Endothelial cell of umbilical vein (primary cell): ENCODE measurements at regions of chr1 and their contacts with region 1.

Region 1: DNA sequence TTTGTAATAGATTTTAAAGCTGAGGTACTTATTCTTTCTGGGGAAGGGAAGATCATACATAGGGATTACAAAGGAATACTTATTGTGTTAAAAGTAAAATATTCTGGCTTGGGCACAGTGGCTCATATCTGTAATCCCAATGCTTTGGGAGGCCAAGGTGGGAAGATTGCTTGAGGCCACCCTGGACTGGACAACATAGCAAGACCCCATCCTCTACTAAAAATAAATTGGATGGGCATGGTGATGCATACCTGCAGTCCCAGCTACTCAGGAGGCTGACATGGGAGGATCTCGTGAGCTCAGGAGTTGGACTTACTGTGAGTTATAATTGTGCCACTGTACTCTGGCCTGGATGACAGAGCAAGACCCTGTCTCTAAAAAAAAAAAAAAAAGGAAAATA is 27.6 kb downstream of the GABPB2 start:
- DNase-seq: no peak
- H3K4me3 ChIP-seq: no peak overlapping the region
- H3K27ac ChIP-seq: no peak overlapping the region
- H3K4me1 ChIP-seq: no peaks in the 10 kb centered on the region
- H3K27me3 ChIP-seq: no peaks in the 10 kb centered on the region
- CTCF ChIP-seq: no peak
- POLR2A ChIP-seq: no peak

Region 2: GRCh38 chr1:150955280-150955679 is 142.8 kb before region 1 on chr1:
- CTCF ChIA-PET with region 1: no interaction called
- POLR2A ChIA-PET with region 1: no interaction called
- dilution Hi-C with region 1: no loop called
- intact Hi-C with region 1: no loop called
- DNase-seq: no peak
- H3K4me3 ChIP-seq: no peak overlapping the region
- H3K27ac ChIP-seq: no peak overlapping the region
- H3K4me1 ChIP-seq: no peaks in the 10 kb centered on the region
- H3K27me3 ChIP-seq: no peaks in the 10 kb centered on the region
- CTCF ChIP-seq: no peak
- POLR2A ChIP-seq: no peak

Region 3: DNA sequence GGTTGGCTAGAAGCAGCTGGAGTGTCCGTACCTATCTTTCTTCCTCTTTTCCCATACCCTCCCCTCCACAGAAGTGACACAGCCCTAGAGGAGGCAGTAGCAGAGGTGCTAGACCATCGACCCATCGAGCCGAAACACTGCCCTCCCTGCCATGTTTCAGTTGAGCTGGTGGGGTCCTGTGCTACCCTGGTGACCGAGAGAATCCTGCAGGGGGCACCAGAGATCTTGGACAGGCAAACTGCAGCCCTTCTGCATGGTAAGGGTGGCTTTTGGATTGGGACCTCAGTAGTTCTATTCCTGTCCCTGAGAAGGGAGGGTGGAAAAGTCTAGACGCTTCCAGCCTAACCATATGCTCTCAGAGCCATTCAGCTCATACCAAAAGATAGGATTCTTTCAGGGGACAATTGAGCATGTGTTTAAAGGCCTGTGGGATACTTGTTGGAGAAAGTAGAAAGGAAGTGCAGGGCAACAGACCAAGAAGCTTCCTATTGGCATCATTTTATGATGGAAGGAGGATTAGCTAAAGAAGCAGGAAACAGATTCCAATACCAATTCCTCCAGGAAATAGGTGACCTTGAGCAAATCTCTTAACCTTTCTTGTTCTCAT is 73.5 kb before region 1 on chr1:
- CTCF ChIA-PET with region 1: interaction called, 60 read pairs
- POLR2A ChIA-PET with region 1: no interaction called
- dilution Hi-C with region 1: no loop called
- intact Hi-C with region 1: no loop called
- DNase-seq: peak; percentile 74
- H3K4me3 ChIP-seq: no peak overlapping the region
- H3K27ac ChIP-seq: no peak overlapping the region
- H3K4me1 ChIP-seq: no peaks in the 10 kb centered on the region
- H3K27me3 ChIP-seq: no peaks in the 10 kb centered on the region
- CTCF ChIP-seq: peak; percentile 76 to 88
- POLR2A ChIP-seq: no peak

Region 4: DNA sequence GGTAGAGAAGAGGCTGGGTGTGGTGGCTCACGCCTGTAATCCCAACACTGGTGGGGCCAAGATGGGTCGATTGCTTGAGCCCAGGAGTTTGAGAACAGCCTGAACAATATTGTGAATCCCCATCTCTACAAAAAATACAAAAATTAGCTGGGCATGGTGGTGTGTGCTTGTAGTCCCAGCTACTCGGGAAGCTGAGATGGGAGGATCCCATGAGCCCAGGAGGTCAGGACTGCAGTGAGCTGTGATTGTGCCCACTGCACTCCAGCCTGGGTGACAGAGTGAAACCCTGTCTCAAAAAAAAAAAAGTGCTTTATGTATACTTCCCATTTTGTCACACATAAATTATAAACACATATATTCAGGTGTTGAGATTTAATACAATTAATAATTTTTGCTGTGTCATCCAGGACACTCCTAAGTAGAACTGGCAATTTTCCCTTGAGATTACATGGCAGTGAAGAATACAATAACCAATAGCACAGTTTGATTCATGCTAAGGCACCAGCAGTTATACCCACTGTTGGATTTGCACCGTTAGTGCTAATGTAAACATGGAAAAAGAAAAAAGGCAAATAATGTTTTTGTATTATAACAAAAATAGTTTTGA is 12.1 kb before region 1 on chr1:
- CTCF ChIA-PET with region 1: interaction called, 66 read pairs
- POLR2A ChIA-PET with region 1: no interaction called
- dilution Hi-C with region 1: no loop called
- intact Hi-C with region 1: no loop called
- DNase-seq: no peak
- H3K4me3 ChIP-seq: no peak overlapping the region
- H3K27ac ChIP-seq: no peak overlapping the region
- H3K4me1 ChIP-seq: no peaks in the 10 kb centered on the region
- H3K27me3 ChIP-seq: no peaks in the 10 kb centered on the region
- CTCF ChIP-seq: no peak
- POLR2A ChIP-seq: no peak

Region 5: DNA sequence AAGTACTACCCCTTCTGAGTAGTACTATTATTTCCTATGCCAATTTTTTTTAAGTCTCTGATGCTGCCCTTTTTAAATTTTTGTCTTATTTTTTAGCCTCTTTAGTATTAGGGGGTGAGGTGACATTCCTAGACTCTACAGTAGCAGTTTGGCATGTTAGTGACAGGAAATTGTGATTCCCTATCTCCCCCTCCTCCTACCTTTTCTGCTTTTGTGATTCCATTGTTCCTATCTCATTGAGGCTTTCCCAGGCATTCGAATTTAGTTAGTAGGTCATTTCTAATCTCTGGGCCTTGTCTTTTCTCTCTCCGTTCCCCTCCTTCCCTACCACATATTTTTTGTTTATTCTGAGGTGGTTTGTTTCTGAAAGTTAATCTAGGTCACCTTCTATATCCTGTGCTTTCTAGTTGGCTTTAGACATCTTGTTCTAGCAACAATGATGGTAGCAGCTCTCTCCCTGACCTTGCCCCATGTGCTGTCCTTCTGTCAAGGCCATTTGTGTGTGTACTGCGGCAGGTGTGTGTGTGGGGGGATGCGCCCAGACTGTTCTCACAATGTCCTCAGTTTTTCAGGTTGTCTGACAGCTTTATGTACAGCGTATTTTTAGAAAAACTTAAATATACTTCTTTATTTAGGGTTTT is 26.8 kb after region 1 on chr1:
- CTCF ChIA-PET with region 1: interaction called, 53 read pairs
- POLR2A ChIA-PET with region 1: interaction called, 4 read pairs
- dilution Hi-C with region 1: no loop called
- intact Hi-C with region 1: no loop called
- DNase-seq: no peak
- H3K4me3 ChIP-seq: no peak overlapping the region
- H3K27ac ChIP-seq: no peak overlapping the region
- H3K4me1 ChIP-seq: peaks cover 5% of the 10 kb centered on the region
- H3K27me3 ChIP-seq: no peaks in the 10 kb centered on the region
- CTCF ChIP-seq: no peak
- POLR2A ChIP-seq: no peak

Region 6: GRCh38 chr1:151146412-151147140 is 48.5 kb after region 1 on chr1 and contains the start of gene SEMA6C:
- CTCF ChIA-PET with region 1: interaction called, 623 read pairs
- POLR2A ChIA-PET with region 1: no interaction called
- dilution Hi-C with region 1: no loop called
- intact Hi-C with region 1: no loop called
- DNase-seq: peak; percentile 95
- H3K4me3 ChIP-seq: peak within 1 kb of the TSS; percentile 49 to 81 (median 59)
- H3K27ac ChIP-seq: no peak within 1 kb of the TSS
- H3K4me1 ChIP-seq: peaks cover 29% of the 10 kb centered on the region
- H3K27me3 ChIP-seq: no peaks in the 10 kb centered on the region
- CTCF ChIP-seq: no peak
- POLR2A ChIP-seq: peak; percentile 91
- total RNA-seq, gene SEMA6C: 46.2 and 53.0 TPM in 2 replicates

Region 7: DNA sequence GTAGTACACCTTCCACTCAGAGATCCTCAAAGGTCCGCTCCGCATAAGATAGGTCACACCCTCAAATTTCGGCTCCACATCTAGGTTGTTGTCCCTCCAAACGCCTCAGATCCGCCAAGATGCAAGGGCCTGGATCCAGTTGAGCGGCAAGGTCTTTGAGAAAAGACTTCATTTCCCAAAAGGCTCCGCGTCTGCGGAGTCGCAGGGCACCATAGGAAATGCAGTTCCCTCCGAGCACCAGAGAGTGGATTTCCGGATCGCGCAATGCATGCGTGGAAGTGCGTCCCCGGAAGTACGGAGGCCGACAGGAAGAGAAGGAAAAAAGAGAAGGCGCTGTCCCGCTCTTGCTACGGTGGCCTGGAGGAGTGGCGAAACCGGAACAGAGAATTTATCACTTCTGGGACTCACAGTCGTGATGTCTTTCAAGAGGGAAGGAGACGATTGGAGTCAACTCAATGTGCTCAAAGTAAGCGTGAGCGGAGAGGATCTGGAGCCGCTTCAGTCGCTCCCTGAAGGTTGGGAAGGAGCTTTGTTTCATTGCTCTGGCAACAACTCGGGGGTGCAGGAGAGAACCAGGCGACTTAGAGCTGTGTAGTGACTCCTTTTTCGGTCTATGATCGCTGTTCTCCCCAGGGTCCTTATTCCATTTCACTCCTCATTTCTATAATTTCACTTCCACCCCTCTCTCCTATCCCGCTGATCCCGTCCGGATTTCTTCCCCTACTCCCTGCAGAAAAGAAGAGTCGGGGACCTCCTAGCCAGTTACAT is 67.8 kb after region 1 on chr1 and contains the starts of genes LYSMD1 and SCNM1:
- CTCF ChIA-PET with region 1: interaction called, 623 read pairs
- POLR2A ChIA-PET with region 1: no interaction called
- dilution Hi-C with region 1: no loop called
- intact Hi-C with region 1: no loop called
- DNase-seq: peak; percentile 98
- H3K4me3 ChIP-seq: peak within 1 kb of the TSS; percentile 65 to 89 (median 81)
- H3K27ac ChIP-seq: peak within 1 kb of the TSS; percentile 65
- H3K4me1 ChIP-seq: peaks cover 19% of the 10 kb centered on the region
- H3K27me3 ChIP-seq: no peaks in the 10 kb centered on the region
- CTCF ChIP-seq: no peak
- POLR2A ChIP-seq: peak; percentile 69
- total RNA-seq, gene LYSMD1: 6.4 and 8.2 TPM in 2 replicates
- total RNA-seq, gene SCNM1: 43.1 and 49.0 TPM in 2 replicates

Region 8: DNA sequence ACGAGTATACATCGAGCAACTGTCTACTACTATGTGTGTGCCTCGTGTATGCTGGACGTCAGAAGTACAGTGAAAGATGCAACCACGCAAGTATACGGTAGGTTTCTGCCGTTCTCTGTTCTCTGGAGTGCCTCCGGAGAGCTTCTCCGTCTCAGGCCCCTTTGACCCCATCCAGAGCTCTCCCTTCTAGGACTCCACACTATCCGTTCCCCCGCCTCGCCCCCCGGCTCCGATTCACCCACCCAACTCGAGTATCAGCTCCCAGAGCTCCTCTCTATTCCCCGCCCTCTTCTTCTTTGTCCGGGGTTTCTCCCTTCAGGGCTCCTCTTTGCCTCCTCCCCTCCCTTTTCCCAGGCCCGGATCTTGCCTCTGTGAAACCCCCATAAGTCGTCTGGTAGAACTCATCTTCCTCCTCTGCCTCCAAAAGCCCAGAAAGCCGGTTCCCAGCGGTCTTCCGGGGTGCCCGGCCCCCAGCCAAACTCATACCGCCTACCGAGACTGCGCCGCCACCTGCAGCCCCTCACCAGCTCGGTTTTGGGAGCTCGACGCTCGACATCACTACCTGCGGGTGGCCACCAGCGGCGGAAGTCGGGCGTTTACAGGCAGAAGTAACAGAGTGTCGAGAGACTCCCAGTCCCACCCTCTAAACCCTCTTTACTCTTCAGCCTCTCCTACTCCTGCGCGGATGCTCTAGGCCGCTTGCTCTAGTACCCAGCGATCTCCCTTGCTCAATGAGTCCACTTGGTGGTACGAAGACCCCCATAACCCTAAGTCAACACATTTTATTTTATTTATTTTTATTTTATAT is 91.7 kb after region 1 on chr1 and contains the start of gene VPS72:
- CTCF ChIA-PET with region 1: interaction called, 19 read pairs
- POLR2A ChIA-PET with region 1: interaction called, 3 read pairs
- dilution Hi-C with region 1: no loop called
- intact Hi-C with region 1: no loop called
- DNase-seq: peak; percentile 91
- H3K4me3 ChIP-seq: peak within 1 kb of the TSS; percentile 63 to 97 (median 93)
- H3K27ac ChIP-seq: peak within 1 kb of the TSS; percentile 56
- H3K4me1 ChIP-seq: peaks cover 10% of the 10 kb centered on the region
- H3K27me3 ChIP-seq: no peaks in the 10 kb centered on the region
- CTCF ChIP-seq: no peak
- POLR2A ChIP-seq: peak; percentile 92
- total RNA-seq, gene VPS72: 83.1 and 85.2 TPM in 2 replicates